Upper lobe of right lung (tissue), 1 donor: ENCODE measurements at regions of chr3 and their contacts with region 1.

Region 1: DNA sequence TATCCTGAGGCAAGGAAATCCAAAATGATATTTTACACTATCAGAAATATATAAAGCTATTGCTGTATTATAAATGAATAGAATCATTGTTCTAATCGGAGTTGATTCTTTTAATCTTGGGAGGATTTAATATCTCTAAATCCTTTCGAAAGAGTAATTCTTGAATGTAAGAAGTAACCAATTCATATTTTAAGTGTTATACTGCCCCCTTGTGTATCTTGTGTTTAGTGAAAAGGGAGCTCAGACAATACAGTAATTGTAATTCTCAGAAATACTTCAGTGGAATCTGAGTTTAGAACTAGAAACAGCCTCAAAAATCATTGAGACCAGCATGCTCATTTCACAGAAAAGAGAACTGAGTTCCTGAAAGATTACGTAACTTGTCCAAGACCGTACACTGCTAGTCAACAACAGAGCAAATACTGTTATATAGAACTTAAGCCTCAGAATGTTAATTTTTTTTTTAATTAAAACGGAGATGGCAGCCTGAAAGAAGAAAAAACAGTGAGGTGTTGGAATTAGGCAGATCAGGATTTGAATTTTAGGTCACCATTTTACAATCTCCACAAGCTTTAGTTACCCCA is 42.9 kb downstream of the PLCH1 start:
- DNase-seq: no peak
- ATAC-seq: peak; percentile 78
- H3K4me3 ChIP-seq: no peak overlapping the region
- H3K27ac ChIP-seq: peak overlapping the region; percentile 32
- H3K4me1 ChIP-seq: no peaks in the 10 kb centered on the region
- H3K27me3 ChIP-seq: no peaks in the 10 kb centered on the region
- CTCF ChIP-seq: peak; percentile 75

Region 2: GRCh38 chr3:155352900-155353490 is 349.0 kb before region 1 on chr3:
- intact Hi-C with region 1: loop called (anchors 10 kb)
- DNase-seq: no peak
- ATAC-seq: peak; percentile 45
- H3K4me3 ChIP-seq: no peak overlapping the region
- H3K27ac ChIP-seq: no peak overlapping the region
- H3K4me1 ChIP-seq: no peaks in the 10 kb centered on the region
- H3K27me3 ChIP-seq: no peaks in the 10 kb centered on the region
- CTCF ChIP-seq: peak; percentile 55

Region 3: GRCh38 chr3:155631323-155632019 is 70.5 kb before region 1 on chr3:
- intact Hi-C with region 1: no loop called
- DNase-seq: no peak
- ATAC-seq: peak; percentile 49
- H3K4me3 ChIP-seq: no peak overlapping the region
- H3K27ac ChIP-seq: no peak overlapping the region
- H3K4me1 ChIP-seq: no peaks in the 10 kb centered on the region
- H3K27me3 ChIP-seq: no peaks in the 10 kb centered on the region
- CTCF ChIP-seq: no peak

Region 4: DNA sequence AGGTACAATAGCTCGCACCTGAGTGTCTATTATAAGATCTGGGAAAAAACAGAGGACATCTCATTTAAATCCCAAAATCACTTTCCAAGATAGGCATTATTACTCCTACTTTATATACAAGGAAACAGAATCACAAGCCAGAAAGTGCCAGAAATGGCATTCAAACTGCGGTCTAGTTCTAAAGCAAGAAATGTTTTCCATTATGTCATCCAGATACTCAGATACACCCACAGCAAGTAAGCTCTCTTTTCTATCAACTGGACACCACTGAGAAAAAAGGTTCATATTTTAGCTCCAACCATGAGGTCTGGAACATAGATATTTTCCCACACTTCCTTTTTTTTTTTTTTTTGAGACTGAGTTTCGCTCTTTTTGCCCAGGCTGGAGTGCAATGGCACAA is 144.1 kb after region 1 on chr3:
- intact Hi-C with region 1: no loop called
- DNase-seq: no peak
- ATAC-seq: no peak
- H3K4me3 ChIP-seq: no peak overlapping the region
- H3K27ac ChIP-seq: no peak overlapping the region
- H3K4me1 ChIP-seq: peaks cover 38% of the 10 kb centered on the region
- H3K27me3 ChIP-seq: no peaks in the 10 kb centered on the region
- CTCF ChIP-seq: no peak